ENCODE measurements at regions of chr13 and their contacts with region 1.

Region 1: GRCh38 chr13:79112016-79112415 is 294.0 kb downstream of the RBM26 start:
- DNase-seq: no peak
- H3K4me3 Mint-ChIP-seq: no peak overlapping the region
- H3K27ac Mint-ChIP-seq: no peak overlapping the region
- H3K4me1 Mint-ChIP-seq: no peaks in the 10 kb centered on the region
- H3K27me3 Mint-ChIP-seq: peaks cover 7% of the 10 kb centered on the region

Region 2: DNA sequence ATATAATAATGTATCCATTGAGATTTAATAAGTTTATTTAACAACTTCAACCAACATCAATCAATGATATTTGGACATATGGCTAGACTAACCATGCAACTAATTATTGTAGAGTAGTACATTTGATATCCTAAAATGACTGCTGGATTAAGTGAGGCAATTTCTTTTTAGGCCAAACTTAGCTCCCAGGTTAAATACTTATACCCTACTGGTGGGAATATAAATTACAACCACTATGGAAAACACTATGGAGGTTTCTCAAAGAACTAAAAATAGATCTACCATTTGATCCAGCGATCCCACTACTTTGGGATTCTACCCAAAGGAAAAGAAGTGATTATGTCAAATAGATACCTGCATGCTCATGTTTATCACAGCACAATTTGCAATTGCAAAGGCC is 51.8 kb before region 1 on chr13:
- intact Hi-C with region 1: no loop called
- DNase-seq: no peak
- H3K4me3 Mint-ChIP-seq: no peak overlapping the region
- H3K27ac Mint-ChIP-seq: no peak overlapping the region
- H3K4me1 Mint-ChIP-seq: no peaks in the 10 kb centered on the region
- H3K27me3 Mint-ChIP-seq: peaks cover 1% of the 10 kb centered on the region

Region 3: DNA sequence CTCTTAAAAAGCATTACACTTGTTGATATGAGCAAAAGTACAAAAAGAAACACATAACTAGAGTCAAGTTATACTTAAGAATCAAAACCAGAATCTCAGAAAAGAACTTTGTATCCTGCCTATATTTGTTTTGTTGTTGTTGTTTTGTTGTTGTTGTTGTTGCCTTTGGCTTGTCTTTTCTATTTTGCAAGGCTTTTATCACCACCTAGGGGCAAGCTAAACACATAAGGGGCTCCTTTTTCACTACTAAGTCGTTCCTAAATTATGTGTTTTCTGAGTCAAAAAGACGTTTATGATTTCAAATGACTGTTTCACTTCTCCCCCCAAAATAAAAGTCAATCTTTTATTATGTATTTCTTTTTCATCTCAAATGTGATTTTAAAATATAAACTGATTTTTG is 43.9 kb after region 1 on chr13:
- intact Hi-C with region 1: loop called (anchors 5 kb)
- DNase-seq: no peak
- H3K4me3 Mint-ChIP-seq: no peak overlapping the region
- H3K27ac Mint-ChIP-seq: no peak overlapping the region
- H3K4me1 Mint-ChIP-seq: no peaks in the 10 kb centered on the region
- H3K27me3 Mint-ChIP-seq: peaks cover 15% of the 10 kb centered on the region